GM12878 (cell line): ENCODE measurements at regions of chr5 and their contacts with region 1.

Region 1: GRCh38 chr5:56814963-56815658 is at the start of gene MAP3K1:
- DNase-seq: no peak
- ATAC-seq: peak; percentile 63
- H3K4me3 ChIP-seq: peak within 1 kb of the TSS; percentile 97
- H3K27ac ChIP-seq: peak within 1 kb of the TSS; percentile 78
- H3K4me1 ChIP-seq: peaks cover 23% of the 10 kb centered on the region
- H3K27me3 ChIP-seq: no peaks in the 10 kb centered on the region
- CTCF ChIP-seq: peak in 1 of 3 experiments; percentile 22; a peak in 2 of 6 replicates
- EP300 ChIP-seq: no peak
- POLR2A ChIP-seq: peak; percentile 63
- RAD21 ChIP-seq: no peak
- polyA plus RNA-seq, gene MAP3K1: 7.5 to 12.1 TPM

Region 2: DNA sequence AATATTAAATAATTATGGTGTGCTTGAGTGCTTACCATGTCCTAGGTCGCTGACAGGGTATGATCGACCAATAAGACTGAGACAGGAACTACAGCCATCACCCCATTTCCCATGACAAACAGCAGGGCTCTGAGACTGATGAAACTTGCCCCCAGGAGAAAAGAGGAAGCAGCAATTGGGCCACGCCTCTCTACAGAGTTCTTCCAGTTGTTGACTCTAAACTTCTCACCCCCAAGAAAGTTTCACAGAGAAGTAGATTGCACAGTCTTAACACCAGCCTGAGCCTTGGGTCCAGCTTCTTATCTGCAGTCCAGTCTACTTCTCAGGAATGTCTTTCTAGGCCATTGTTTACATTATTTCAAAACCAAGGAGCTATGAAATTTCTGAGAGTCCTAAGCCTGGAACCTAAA is 399.8 kb before region 1 on chr5:
- CTCF ChIA-PET with region 1: no interaction called
- POLR2A ChIA-PET with region 1: interaction called, 4 read pairs
- RAD21 ChIA-PET with region 1: interaction called, 4 read pairs
- SMC1A ChIA-PET with region 1: interaction called, 4 read pairs
- in situ Hi-C with region 1: no loop called
- intact Hi-C with region 1: loop called (anchors 5 kb)
- DNase-seq: peak; percentile 92
- ATAC-seq: peak; percentile 84
- H3K4me3 ChIP-seq: peak overlapping the region; percentile 48; the same call in 1 of the 2 replicates
- H3K27ac ChIP-seq: peak overlapping the region; percentile 79
- H3K4me1 ChIP-seq: peaks cover 40% of the 10 kb centered on the region
- H3K27me3 ChIP-seq: no peaks in the 10 kb centered on the region
- CTCF ChIP-seq: no peak
- EP300 ChIP-seq: peak in 1 of 2 experiments; percentile 39; a peak in 2 of 4 replicates
- POLR2A ChIP-seq: 0 out of 2 replicates have a peak, but pooled peaks have one; percentile 26
- RAD21 ChIP-seq: 0 out of 2 replicates have a peak, but pooled peaks have one; percentile 10

Region 3: GRCh38 chr5:56588636-56589480 is 226.3 kb before region 1 on chr5:
- CTCF ChIA-PET with region 1: no interaction called
- POLR2A ChIA-PET with region 1: no interaction called
- RAD21 ChIA-PET with region 1: interaction called, 4 read pairs
- SMC1A ChIA-PET with region 1: no interaction called
- in situ Hi-C with region 1: no loop called
- intact Hi-C with region 1: loop called (anchors 5 kb)
- DNase-seq: peak; percentile 78
- ATAC-seq: peak; percentile 99
- H3K4me3 ChIP-seq: peak overlapping the region; percentile 38; the same call in 1 of the 2 replicates
- H3K27ac ChIP-seq: peak overlapping the region; percentile 82
- H3K4me1 ChIP-seq: peaks cover 22% of the 10 kb centered on the region
- H3K27me3 ChIP-seq: no peaks in the 10 kb centered on the region
- CTCF ChIP-seq: no peak
- EP300 ChIP-seq: peak; percentile 73 to 96
- POLR2A ChIP-seq: peak; percentile 69
- RAD21 ChIP-seq: peak; percentile 17; the same call in 1 of the 2 replicates

Region 4: GRCh38 chr5:56692359-56693219 is 122.5 kb before region 1 on chr5:
- CTCF ChIA-PET with region 1: no interaction called
- POLR2A ChIA-PET with region 1: no interaction called
- RAD21 ChIA-PET with region 1: no interaction called
- SMC1A ChIA-PET with region 1: interaction called, 4 read pairs
- in situ Hi-C with region 1: no loop called
- intact Hi-C with region 1: loop called (anchors 2 kb)
- DNase-seq: peak; percentile 47
- ATAC-seq: peak; percentile 62
- H3K4me3 ChIP-seq: no peak overlapping the region
- H3K27ac ChIP-seq: no peak overlapping the region
- H3K4me1 ChIP-seq: peaks cover 1% of the 10 kb centered on the region; the same call in 1 of the 2 replicates
- H3K27me3 ChIP-seq: no peaks in the 10 kb centered on the region; a peak in 1 of 4 replicates
- CTCF ChIP-seq: no peak
- EP300 ChIP-seq: no peak
- POLR2A ChIP-seq: no peak
- RAD21 ChIP-seq: peak; percentile 20; the same call in 1 of the 2 replicates

Region 5: DNA sequence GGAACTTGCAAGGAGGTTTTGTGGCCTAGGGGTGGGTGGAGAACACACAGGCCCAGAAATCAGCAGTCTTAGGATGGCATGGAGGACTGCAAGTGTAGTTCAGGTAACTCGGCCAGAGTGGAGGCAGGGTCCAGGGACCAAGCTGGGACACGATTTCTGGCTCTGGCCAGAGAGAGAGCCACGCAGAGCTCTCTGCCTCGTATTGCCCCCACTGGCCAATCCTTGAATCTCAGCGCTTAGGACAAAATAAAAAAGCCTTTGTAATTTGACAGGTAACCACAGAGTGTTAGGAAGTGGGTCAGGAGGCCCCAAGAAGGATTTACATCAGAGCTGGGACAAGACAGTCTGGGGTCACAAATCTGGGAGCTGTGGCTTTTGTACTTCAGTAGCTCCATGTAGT is 11.9 kb after region 1 on chr5:
- CTCF ChIA-PET with region 1: interaction called, 5 read pairs
- POLR2A ChIA-PET with region 1: interaction called, 5 read pairs
- RAD21 ChIA-PET with region 1: interaction called, 6 read pairs
- SMC1A ChIA-PET with region 1: interaction called, 18 read pairs
- in situ Hi-C with region 1: no loop called
- intact Hi-C with region 1: no loop called
- DNase-seq: no peak
- ATAC-seq: peak; percentile 52
- H3K4me3 ChIP-seq: no peak overlapping the region
- H3K27ac ChIP-seq: no peak overlapping the region
- H3K4me1 ChIP-seq: peaks cover 7% of the 10 kb centered on the region
- H3K27me3 ChIP-seq: no peaks in the 10 kb centered on the region
- CTCF ChIP-seq: peak in 2 of 3 experiments; percentile 27 to 33; a peak in 3 of 6 replicates
- EP300 ChIP-seq: no peak
- POLR2A ChIP-seq: no peak
- RAD21 ChIP-seq: peak; percentile 39; the same call in 1 of the 2 replicates

Region 6: GRCh38 chr5:57173185-57174127 is 358.3 kb after region 1 on chr5 and contains the start of gene GPBP1:
- CTCF ChIA-PET with region 1: no interaction called
- POLR2A ChIA-PET with region 1: no interaction called
- RAD21 ChIA-PET with region 1: no interaction called
- SMC1A ChIA-PET with region 1: no interaction called
- in situ Hi-C with region 1: no loop called
- intact Hi-C with region 1: no loop called
- DNase-seq: peak; percentile 94
- ATAC-seq: peak; percentile 72
- H3K4me3 ChIP-seq: peak within 1 kb of the TSS; percentile 87
- H3K27ac ChIP-seq: peak within 1 kb of the TSS; percentile 99
- H3K4me1 ChIP-seq: no peaks in the 10 kb centered on the region
- H3K27me3 ChIP-seq: no peaks in the 10 kb centered on the region
- CTCF ChIP-seq: no peak
- EP300 ChIP-seq: peak; percentile 68 to 72; a peak in 2 of 4 replicates
- POLR2A ChIP-seq: peak; percentile 77
- RAD21 ChIP-seq: no peak
- polyA plus RNA-seq, gene GPBP1: 27.0 to 32.5 TPM